ENCODE measurements at regions of chr19 and their contacts with region 1.

Region 1: GRCh38 chr19:33778089-33778791 is 18.4 kb upstream of the KCTD15 start:
- DNase-seq: peak; percentile 92
- ATAC-seq: peak; percentile 97

Region 2: GRCh38 chr19:33815380-33816340 is 37.4 kb after region 1 on chr19:
- intact Hi-C with region 1: no loop called
- DNase-seq: peak; percentile 16
- ATAC-seq: no peak

Region 3: GRCh38 chr19:33927789-33928457 is 149.7 kb after region 1 on chr19:
- intact Hi-C with region 1: no loop called
- DNase-seq: no peak
- ATAC-seq: no peak

Region 4: GRCh38 chr19:33998739-33999345 is 220.6 kb after region 1 on chr19:
- intact Hi-C with region 1: loop called (anchors 5 kb)
- DNase-seq: no peak
- ATAC-seq: no peak

Region 5: GRCh38 chr19:34096020-34096915 is 318.0 kb after region 1 on chr19:
- intact Hi-C with region 1: loop called (anchors 1 kb)
- DNase-seq: no peak
- ATAC-seq: peak; percentile 45

Region 6: GRCh38 chr19:34145741-34146202 is 367.5 kb after region 1 on chr19:
- intact Hi-C with region 1: loop called (anchors 5 kb)
- DNase-seq: no peak
- ATAC-seq: peak; percentile 49